CD4-positive, alpha-beta memory T cell (primary cell): ENCODE measurements at regions of chr1 and their contacts with region 1.

Region 1: GRCh38 chr1:7770997-7771822 is at the start of gene VAMP3:
- DNase-seq: peak; percentile 75 to 80 (median 76)
- H3K4me3 ChIP-seq: peak within 1 kb of the TSS; percentile 32 to 80
- H3K4me3 Mint-ChIP-seq: peak within 1 kb of the TSS; percentile 86 to 93 (median 90)
- H3K27ac ChIP-seq: peak within 1 kb of the TSS; percentile 80
- H3K27ac Mint-ChIP-seq: peak within 1 kb of the TSS; percentile 82 to 92 (median 90)
- H3K4me1 ChIP-seq: peaks cover 18% of the 10 kb centered on the region
- H3K4me1 Mint-ChIP-seq: peaks cover 20 to 45% (median 35%) of the 10 kb centered on the region in 4 donors
- H3K27me3 ChIP-seq: no peaks in the 10 kb centered on the region
- H3K27me3 Mint-ChIP-seq: peaks cover 3 to 6% of the 10 kb centered on the region in 2 donors
- total RNA-seq, gene VAMP3: 53.3 to 67.0 TPM

Region 2: GRCh38 chr1:6701437-6702153 is 1069.6 kb before region 1 on chr1 and contains the start of gene DNAJC11:
- CTCF ChIA-PET with region 1: no interaction called
- POLR2A ChIA-PET with region 1: no interaction called
- intact Hi-C with region 1: loop called (anchors 5 kb)
- DNase-seq: peak; percentile 88 to 96 (median 93)
- H3K4me3 ChIP-seq: peak within 1 kb of the TSS; percentile 61 to 81
- H3K4me3 Mint-ChIP-seq: peak within 1 kb of the TSS; percentile 93 to 97 (median 94)
- H3K27ac ChIP-seq: peak within 1 kb of the TSS; percentile 84
- H3K27ac Mint-ChIP-seq: peak within 1 kb of the TSS; percentile 85 to 98 (median 96)
- H3K4me1 ChIP-seq: peaks cover 22% of the 10 kb centered on the region
- H3K4me1 Mint-ChIP-seq: peaks cover 15 to 31% (median 26%) of the 10 kb centered on the region in 4 donors
- H3K27me3 ChIP-seq: no peaks in the 10 kb centered on the region
- H3K27me3 Mint-ChIP-seq: no peaks in the 10 kb centered on the region
- total RNA-seq, gene DNAJC11: 40.5 to 41.6 TPM

Region 3: GRCh38 chr1:7783826-7784491 is 12.7 kb after region 1 on chr1 and contains the start of gene PER3:
- CTCF ChIA-PET with region 1: interaction called, 6 read pairs
- POLR2A ChIA-PET with region 1: interaction called, 11 read pairs
- intact Hi-C with region 1: loop called (anchors 1 kb)
- DNase-seq: peak; percentile 89 to 97 (median 94)
- H3K4me3 ChIP-seq: peak within 1 kb of the TSS in 1 of 2 donors; percentile 53
- H3K4me3 Mint-ChIP-seq: peak within 1 kb of the TSS; percentile 72 to 87 (median 82)
- H3K27ac ChIP-seq: peak within 1 kb of the TSS; percentile 86
- H3K27ac Mint-ChIP-seq: peak within 1 kb of the TSS; percentile 70 to 88 (median 83)
- H3K4me1 ChIP-seq: peaks cover 28% of the 10 kb centered on the region
- H3K4me1 Mint-ChIP-seq: peaks cover 20 to 39% (median 27%) of the 10 kb centered on the region in 4 donors
- H3K27me3 ChIP-seq: no peaks in the 10 kb centered on the region
- H3K27me3 Mint-ChIP-seq: no peaks in the 10 kb centered on the region
- total RNA-seq, gene PER3: 7.4 to 7.9 TPM